Activated CD4-positive, alpha-beta memory T cell treated with anti-CD3 and anti-CD28 coated beads for 36 hours (primary cell): ENCODE measurements at regions of chr20 and their contacts with region 1.

Region 1: DNA sequence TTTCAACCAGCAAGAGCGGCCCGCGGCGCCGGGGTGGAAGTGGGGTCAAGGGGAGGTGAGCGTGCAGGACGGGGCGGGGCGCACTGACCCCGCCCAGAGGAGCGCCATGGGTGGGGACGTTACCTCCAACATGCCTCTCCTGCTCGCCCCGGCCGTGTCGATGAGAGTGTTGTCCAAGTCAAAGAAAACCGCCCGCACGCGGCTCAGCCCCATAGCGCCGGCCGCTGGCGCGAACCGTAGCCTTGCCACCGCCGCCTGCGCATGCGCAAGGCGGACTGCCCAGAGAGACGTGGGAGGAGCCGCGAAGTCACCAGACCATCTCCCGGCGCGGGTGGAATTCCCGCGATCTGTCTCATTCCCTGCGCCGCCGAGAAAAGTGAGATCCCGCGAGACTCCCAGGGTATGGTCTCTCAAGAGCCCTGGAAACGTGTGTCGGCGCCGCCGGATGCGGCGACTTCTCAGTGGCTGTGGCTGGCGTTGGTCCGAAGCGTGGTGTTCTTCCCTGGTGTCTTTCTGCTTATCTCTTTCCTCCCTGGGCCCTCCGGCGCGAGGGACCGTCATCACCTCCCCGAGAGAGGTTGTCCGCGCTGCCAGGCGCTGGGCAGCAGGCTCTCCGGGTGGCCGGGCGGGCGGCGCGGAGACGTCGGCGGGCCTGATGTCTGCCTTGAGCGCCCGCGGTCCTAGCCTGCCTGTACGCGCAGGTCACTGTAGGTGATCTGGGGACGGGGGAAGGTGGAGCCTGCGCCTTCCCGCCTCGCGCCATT is at the start of gene NANP:
- DNase-seq: peak; percentile 96
- H3K4me3 Mint-ChIP-seq: peak within 1 kb of the TSS; percentile 78
- H3K27ac Mint-ChIP-seq: peak within 1 kb of the TSS; percentile 96
- H3K4me1 Mint-ChIP-seq: peaks cover 18% of the 10 kb centered on the region
- H3K27me3 Mint-ChIP-seq: no peaks in the 10 kb centered on the region
- total RNA-seq, gene NANP: 6.5 to 7.3 TPM

Region 2: DNA sequence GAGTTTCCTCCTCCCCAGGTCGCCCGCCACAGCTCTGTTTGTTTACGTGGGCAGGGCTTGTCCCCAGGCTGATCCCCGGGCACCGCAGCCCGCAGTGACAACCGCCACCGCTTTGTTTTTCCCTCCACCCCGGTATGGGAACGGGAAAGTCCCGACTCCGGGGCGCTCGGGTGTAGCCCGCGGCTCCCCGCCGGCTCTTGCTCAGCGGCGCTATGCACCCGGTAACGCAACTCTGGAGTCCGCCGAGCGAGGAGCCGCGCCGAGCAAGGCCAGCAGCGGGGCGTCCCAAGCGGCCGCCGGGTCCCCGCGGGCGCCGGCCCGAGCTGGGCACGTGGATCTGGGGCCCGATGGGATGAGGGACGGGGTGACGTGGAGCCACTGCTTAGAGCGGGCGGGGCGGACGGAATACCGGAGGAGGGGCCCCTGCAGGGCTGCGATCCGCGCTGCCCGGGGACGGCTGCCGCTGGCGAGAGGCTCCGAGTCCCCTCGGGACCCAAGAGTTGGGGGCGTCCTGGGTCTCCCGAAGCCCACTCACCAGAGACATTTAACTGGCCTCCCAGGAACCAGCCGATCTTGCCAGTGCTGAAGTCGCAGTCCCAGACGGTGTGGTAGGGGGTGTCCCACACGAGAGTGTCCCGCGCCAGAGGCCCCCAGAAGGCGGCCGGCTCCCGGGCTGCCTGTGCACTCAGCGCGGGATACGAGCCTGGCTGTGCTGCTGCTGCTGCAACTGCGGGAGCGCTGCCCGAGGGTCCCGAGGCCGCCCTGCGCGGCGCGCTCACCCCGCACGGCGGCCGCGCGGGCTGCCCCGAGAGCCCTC is 566.5 kb before region 1 on chr20:
- CTCF ChIA-PET with region 1: no interaction called
- POLR2A ChIA-PET with region 1: no interaction called
- intact Hi-C with region 1: loop called (anchors 5 kb)
- DNase-seq: peak; percentile 87
- H3K4me3 Mint-ChIP-seq: peak overlapping the region; percentile 79
- H3K27ac Mint-ChIP-seq: peak overlapping the region; percentile 79
- H3K4me1 Mint-ChIP-seq: peaks cover 47% of the 10 kb centered on the region
- H3K27me3 Mint-ChIP-seq: no peaks in the 10 kb centered on the region

Region 3: DNA sequence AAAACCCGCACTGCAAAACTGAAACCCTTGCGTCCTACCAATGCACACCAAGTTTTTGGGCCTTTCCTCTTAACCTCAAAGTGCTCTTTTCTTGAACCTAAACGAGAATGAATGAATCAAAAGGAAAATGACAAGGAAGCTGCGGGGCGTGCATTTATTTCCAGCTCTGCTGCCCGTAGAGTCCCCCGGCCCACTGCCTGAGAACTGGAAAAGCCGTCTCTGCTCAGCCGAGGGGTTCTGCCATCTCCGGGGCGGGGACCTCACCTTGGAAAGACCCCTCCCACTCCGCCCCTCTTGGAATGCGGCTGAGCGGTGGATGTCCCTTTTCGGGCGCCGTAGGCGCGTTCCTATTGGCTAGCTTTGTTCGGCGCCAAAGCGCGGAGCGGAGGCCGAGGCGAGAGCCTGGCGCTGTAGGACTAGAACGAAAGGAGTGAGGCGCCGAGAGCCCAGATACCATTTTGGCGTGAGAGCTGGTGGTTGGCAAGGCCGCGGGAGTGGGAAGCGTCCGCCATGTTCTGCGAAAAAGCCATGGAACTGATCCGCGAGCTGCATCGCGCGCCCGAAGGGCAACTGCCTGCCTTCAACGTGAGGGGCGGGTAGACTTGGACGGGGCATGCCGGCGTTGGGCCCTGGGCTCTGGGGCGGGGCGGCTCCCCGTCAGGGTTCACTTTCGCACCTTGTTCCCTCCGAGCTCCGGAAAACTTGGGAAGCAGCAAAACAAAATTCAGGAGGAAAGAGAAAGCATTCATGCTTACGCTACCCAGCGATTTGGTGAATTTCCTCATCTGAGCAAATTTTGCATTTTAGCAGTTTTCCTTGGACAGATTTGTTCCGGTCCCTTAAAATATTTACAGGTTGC is 216.4 kb before region 1 on chr20 and contains the start of gene GINS1:
- CTCF ChIA-PET with region 1: no interaction called
- POLR2A ChIA-PET with region 1: no interaction called
- intact Hi-C with region 1: loop called (anchors 5 kb)
- DNase-seq: peak; percentile 92
- H3K4me3 Mint-ChIP-seq: peak within 1 kb of the TSS; percentile 88
- H3K27ac Mint-ChIP-seq: peak within 1 kb of the TSS; percentile 85
- H3K4me1 Mint-ChIP-seq: peaks cover 17% of the 10 kb centered on the region
- H3K27me3 Mint-ChIP-seq: no peaks in the 10 kb centered on the region
- total RNA-seq, gene GINS1: 31.5 to 32.3 TPM

Region 4: DNA sequence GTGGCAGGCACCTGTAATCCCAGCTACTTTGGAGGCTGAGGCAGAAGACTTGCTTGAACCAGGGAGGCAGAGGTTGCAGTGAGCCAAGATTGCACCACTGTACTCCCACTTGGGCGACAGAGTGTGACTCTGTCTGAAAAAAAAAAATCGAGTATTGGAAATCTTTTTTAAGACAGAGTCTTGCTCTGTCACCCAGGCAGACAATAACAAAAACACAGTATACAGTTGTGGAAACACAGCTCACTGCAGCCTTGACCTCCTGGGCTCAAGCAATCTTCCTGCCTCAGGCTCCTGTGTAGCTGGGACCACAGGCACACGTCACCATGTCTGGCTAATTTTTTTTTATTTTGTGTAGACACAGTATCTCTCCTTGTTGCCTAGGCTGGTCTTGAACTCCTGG is 15.1 kb before region 1 on chr20:
- CTCF ChIA-PET with region 1: no interaction called
- POLR2A ChIA-PET with region 1: no interaction called
- intact Hi-C with region 1: loop called (anchors 2 kb)
- DNase-seq: no peak
- H3K4me3 Mint-ChIP-seq: no peak overlapping the region
- H3K27ac Mint-ChIP-seq: no peak overlapping the region
- H3K4me1 Mint-ChIP-seq: no peaks in the 10 kb centered on the region
- H3K27me3 Mint-ChIP-seq: no peaks in the 10 kb centered on the region

Region 5: DNA sequence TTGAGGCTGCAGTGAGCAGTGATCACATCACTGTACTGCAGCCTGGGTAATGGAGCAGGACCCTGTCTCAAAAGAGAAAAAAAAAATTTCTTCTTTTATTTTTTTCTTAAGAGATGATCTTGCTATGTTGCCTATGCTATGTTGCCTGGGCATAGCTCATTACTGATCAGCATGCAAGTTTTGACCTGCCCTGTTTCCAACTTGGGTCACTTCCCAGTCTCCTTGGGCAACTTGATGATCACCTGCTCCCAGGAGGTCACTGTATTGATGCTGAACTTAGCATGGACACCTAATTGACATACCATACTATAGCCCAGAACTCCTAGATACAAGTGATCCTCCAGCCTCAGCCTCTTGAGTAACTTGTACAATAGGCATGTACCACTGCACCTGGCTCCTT is 30.6 kb after region 1 on chr20:
- CTCF ChIA-PET with region 1: no interaction called
- POLR2A ChIA-PET with region 1: no interaction called
- intact Hi-C with region 1: no loop called
- DNase-seq: no peak
- H3K4me3 Mint-ChIP-seq: no peak overlapping the region
- H3K27ac Mint-ChIP-seq: no peak overlapping the region
- H3K4me1 Mint-ChIP-seq: no peaks in the 10 kb centered on the region
- H3K27me3 Mint-ChIP-seq: no peaks in the 10 kb centered on the region

Region 6: GRCh38 chr20:25750765-25751696 is 127.1 kb after region 1 on chr20:
- CTCF ChIA-PET with region 1: no interaction called
- POLR2A ChIA-PET with region 1: no interaction called
- intact Hi-C with region 1: loop called (anchors 1 kb)
- DNase-seq: peak; percentile 80
- H3K4me3 Mint-ChIP-seq: peak overlapping the region; percentile 82
- H3K27ac Mint-ChIP-seq: peak overlapping the region; percentile 58
- H3K4me1 Mint-ChIP-seq: peaks cover 18% of the 10 kb centered on the region
- H3K27me3 Mint-ChIP-seq: no peaks in the 10 kb centered on the region